ENCODE measurements at regions of chrX and their contacts with region 1.

Region 1: GRCh38 chrX:34884817-34885216 is 57.8 kb upstream of the FAM47B start:
- DNase-seq: peak; percentile 80
- H3K4me3 ChIP-seq: no peak overlapping the region
- H3K27ac ChIP-seq: no peak overlapping the region
- H3K4me1 ChIP-seq: peaks cover 22% of the 10 kb centered on the region
- H3K27me3 ChIP-seq: no peaks in the 10 kb centered on the region
- CTCF ChIP-seq: no peak

Region 2: DNA sequence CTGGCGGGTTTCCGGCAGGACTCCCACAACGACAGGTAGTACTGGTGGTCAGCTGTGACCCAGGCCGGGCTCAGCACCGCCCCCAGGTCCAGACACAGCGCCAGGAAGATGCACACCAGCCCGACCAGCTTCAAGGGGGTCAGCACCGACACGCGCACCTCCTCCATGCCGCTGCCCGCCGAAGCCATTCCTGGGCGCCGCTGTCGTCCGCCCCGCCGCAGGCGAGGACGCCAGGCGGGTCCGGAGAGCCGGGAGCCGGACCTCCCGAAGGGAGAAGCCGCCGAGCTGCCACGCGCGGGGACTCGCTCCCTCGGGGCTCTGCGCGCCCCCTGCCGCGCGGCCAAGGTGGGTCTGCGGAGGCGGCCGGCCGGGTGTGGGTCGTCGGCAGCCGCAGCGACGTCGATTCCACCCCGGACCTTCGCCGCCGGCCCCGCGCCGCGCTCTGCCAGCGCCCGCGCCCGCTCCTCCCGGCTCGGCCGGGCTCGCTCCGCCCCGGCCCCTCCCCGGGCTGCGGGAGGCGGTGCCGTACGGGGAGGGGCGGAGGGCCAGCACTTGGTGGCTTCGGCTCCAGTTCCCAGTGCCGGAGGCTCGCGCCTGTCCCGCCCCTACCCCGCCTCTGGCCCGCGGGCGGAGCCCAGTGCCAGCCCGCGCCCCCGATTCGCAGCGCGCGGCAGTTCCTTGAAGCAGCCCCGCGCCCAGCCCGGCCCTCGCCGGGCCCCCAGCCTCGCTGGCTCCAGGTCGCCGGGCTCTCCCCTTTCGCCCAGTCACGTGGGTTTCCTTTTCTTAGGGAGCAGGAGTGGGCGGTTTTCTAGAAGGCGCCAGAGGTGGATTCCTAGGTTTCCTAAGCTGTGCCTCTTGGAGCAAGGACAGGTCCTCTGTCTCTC is 227.7 kb before region 1 on chrX and contains the start of gene TMEM47:
- CTCF ChIA-PET with region 1: no interaction called
- dilution Hi-C with region 1: no loop called
- in situ Hi-C with region 1: no loop called
- intact Hi-C with region 1: loop called (anchors 2 kb)
- DNase-seq: peak; percentile 69
- H3K4me3 ChIP-seq: peak within 1 kb of the TSS; percentile 49 to 68 (median 61)
- H3K27ac ChIP-seq: peak within 1 kb of the TSS; percentile 62
- H3K4me1 ChIP-seq: no peaks in the 10 kb centered on the region
- H3K27me3 ChIP-seq: peaks cover 8% of the 10 kb centered on the region
- CTCF ChIP-seq: no peak
- total RNA-seq, gene TMEM47: 11.9 to 28.0 TPM

Region 3: DNA sequence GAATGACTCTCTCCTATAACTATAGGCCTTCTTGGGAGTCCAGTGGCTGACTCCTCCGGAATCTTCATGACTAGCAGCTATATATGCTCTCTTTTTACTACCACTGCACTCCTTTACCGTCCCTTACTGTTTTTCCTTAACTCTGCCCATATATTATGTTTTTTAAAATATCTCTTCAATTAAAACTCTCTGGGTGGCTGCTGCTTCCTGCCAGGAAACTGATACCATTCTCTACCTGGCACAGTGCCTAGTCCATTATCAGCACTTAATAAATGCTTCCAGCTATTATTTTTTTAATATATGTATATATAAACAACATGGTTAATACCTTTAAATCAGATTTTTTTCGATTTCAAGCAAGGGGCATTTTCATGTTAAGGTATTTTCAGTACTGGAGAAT is 78.9 kb before region 1 on chrX:
- CTCF ChIA-PET with region 1: no interaction called
- dilution Hi-C with region 1: no loop called
- in situ Hi-C with region 1: no loop called
- intact Hi-C with region 1: no loop called
- DNase-seq: no peak
- H3K4me3 ChIP-seq: no peak overlapping the region
- H3K27ac ChIP-seq: no peak overlapping the region
- H3K4me1 ChIP-seq: no peaks in the 10 kb centered on the region
- H3K27me3 ChIP-seq: peaks cover 2% of the 10 kb centered on the region
- CTCF ChIP-seq: no peak

Region 4: GRCh38 chrX:34849371-34849770 is 35.4 kb before region 1 on chrX:
- CTCF ChIA-PET with region 1: no interaction called
- dilution Hi-C with region 1: no loop called
- in situ Hi-C with region 1: no loop called
- intact Hi-C with region 1: loop called (anchors 5 kb)
- DNase-seq: peak; percentile 26
- H3K4me3 ChIP-seq: no peak overlapping the region
- H3K27ac ChIP-seq: no peak overlapping the region
- H3K4me1 ChIP-seq: peaks cover 6% of the 10 kb centered on the region
- H3K27me3 ChIP-seq: peaks cover 2% of the 10 kb centered on the region
- CTCF ChIP-seq: no peak

Region 5: GRCh38 chrX:34943235-34943634 is 58.4 kb after region 1 on chrX:
- CTCF ChIA-PET with region 1: no interaction called
- dilution Hi-C with region 1: no loop called
- in situ Hi-C with region 1: no loop called
- intact Hi-C with region 1: no loop called
- DNase-seq: no peak
- H3K4me3 ChIP-seq: no peak overlapping the region
- H3K27ac ChIP-seq: no peak overlapping the region
- H3K4me1 ChIP-seq: no peaks in the 10 kb centered on the region
- H3K27me3 ChIP-seq: peaks cover 2% of the 10 kb centered on the region
- CTCF ChIP-seq: no peak

Measured in mammary epithelial cell (primary cell).